OCI-LY7 (cell line): ENCODE measurements at regions of chr6 and their contacts with region 1.

Region 1: GRCh38 chr6:15662326-15663129 is at the start of gene DTNBP1:
- DNase-seq: peak; percentile 88
- H3K4me3 ChIP-seq: peak within 1 kb of the TSS; percentile 75
- H3K27ac ChIP-seq: peak within 1 kb of the TSS; percentile 48
- H3K4me1 ChIP-seq: peaks cover 39% of the 10 kb centered on the region
- CTCF ChIP-seq: no peak
- total RNA-seq, gene DTNBP1: 9.8 and 10.9 TPM in 2 replicates

Region 2: GRCh38 chr6:15643542-15643941 is 19.0 kb before region 1 on chr6:
- CTCF ChIA-PET with region 1: no interaction called
- POLR2A ChIA-PET with region 1: interaction called, 12 read pairs
- intact Hi-C with region 1: no loop called
- DNase-seq: no peak
- H3K4me3 ChIP-seq: no peak overlapping the region
- H3K27ac ChIP-seq: no peak overlapping the region
- H3K4me1 ChIP-seq: no peaks in the 10 kb centered on the region
- CTCF ChIP-seq: no peak